PC-9 (cell line): ENCODE measurements at regions of chr10 and their contacts with region 1.

Region 1: GRCh38 chr10:102394079-102394800 is 1.3 kb upstream of the NFKB2 start:
- DNase-seq: peak; percentile 75 to 87
- H3K4me3 ChIP-seq: peak overlapping the region; percentile 77
- H3K27ac ChIP-seq: peak overlapping the region; percentile 40
- H3K4me1 ChIP-seq: 0 out of 2 replicates have a peak, but pooled peaks cover 6% of the 10 kb centered on the region
- H3K27me3 ChIP-seq: no peaks in the 10 kb centered on the region
- CTCF ChIP-seq: peak; percentile 79

Region 2: GRCh38 chr10:102368072-102368471 is 26.2 kb before region 1 on chr10:
- CTCF ChIA-PET with region 1: no interaction called
- POLR2A ChIA-PET with region 1: interaction called, 3 read pairs
- intact Hi-C with region 1: loop called (anchors 2 kb)
- DNase-seq: peak; percentile 79 to 90
- H3K4me3 ChIP-seq: no peak overlapping the region
- H3K27ac ChIP-seq: peak overlapping the region; percentile 80
- H3K4me1 ChIP-seq: peaks cover 23% of the 10 kb centered on the region
- H3K27me3 ChIP-seq: no peaks in the 10 kb centered on the region
- CTCF ChIP-seq: no peak

Region 3: DNA sequence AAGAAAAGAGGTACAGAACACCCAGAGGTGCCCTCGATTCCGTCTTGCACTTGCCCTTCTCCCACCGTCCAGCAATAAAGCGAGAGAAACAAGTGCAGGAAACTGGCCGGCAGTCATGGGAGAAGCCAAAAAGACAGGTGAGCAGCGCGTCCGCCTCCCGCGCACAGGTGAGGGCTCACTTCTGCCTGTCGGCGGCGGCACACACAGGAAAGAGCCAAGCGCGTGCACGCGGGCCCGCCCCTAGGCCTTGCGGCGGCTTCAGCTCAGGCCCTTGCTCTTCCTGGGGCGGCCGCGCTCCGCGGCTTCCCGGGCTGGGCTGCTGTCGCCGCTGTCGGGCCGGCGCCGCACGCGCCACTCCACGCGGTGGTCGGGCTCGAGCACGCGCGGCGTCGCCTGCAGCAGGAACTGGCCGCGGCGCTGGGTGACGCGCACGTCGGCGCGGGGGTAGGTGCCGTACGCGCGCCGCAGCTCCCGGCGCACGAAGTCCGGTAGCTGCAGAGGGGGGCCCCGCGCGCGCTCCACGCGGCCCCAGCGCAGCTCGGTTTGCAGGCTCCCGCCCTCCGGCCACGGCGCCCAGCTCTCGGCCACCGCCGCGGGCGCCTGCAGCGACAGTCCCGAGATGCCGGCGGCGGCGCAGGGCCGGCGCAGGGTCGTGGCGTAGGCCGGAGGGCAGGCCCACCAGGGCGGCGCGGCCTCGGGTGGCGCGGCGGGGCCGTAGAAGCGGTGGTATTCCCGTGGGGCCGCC is 56.1 kb after region 1 on chr10:
- CTCF ChIA-PET with region 1: interaction called, 12 read pairs
- POLR2A ChIA-PET with region 1: no interaction called
- intact Hi-C with region 1: no loop called
- DNase-seq: peak; percentile 50 to 82
- H3K4me3 ChIP-seq: peak overlapping the region; percentile 77
- H3K27ac ChIP-seq: peak overlapping the region; percentile 59
- H3K4me1 ChIP-seq: peaks cover 17% of the 10 kb centered on the region
- H3K27me3 ChIP-seq: no peaks in the 10 kb centered on the region
- CTCF ChIP-seq: no peak

Region 4: DNA sequence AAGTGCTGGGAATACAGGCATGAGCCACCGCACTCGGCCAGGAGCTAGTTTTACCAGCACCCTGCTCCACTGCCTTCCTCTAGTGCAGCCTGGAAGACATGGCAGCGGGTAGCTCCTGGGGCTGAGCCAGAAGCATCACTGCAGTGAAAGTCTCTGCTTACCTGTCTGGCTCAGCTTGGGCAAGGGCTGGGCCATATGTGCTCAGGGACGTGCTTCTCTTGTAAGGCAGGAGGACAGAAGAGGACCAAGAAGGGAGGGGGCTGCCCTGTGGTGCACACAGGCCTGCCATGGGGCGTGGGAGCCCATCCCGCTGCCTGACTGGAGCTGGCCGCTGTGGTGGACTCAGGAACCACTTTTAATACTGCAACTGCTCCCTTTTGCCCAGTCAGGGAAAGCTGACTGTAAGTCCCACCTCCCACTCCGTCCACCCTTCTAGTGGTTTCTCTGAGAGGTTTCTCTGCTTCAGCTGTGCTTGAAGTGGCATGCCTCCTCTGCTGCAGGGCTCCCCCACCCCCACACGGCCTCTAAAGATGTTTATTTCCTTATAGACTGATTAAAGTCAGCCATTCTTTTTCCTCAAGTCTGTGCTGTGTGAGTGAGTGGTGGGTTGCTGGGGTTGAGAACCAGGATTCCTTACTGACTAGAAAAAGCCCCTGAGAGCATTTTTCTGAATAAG is 82.4 kb after region 1 on chr10:
- CTCF ChIA-PET with region 1: no interaction called
- POLR2A ChIA-PET with region 1: no interaction called
- intact Hi-C with region 1: loop called (anchors 5 kb)
- DNase-seq: no peak
- H3K4me3 ChIP-seq: no peak overlapping the region
- H3K27ac ChIP-seq: no peak overlapping the region
- H3K4me1 ChIP-seq: no peaks in the 10 kb centered on the region
- H3K27me3 ChIP-seq: no peaks in the 10 kb centered on the region
- CTCF ChIP-seq: no peak

Region 5: GRCh38 chr10:102583435-102584417 is 189.5 kb after region 1 on chr10:
- CTCF ChIA-PET with region 1: interaction called, 3 read pairs
- POLR2A ChIA-PET with region 1: interaction called, 21 read pairs
- intact Hi-C with region 1: no loop called
- DNase-seq: peak; percentile 60 to 66
- H3K4me3 ChIP-seq: no peak overlapping the region
- H3K27ac ChIP-seq: no peak overlapping the region
- H3K4me1 ChIP-seq: no peaks in the 10 kb centered on the region
- H3K27me3 ChIP-seq: no peaks in the 10 kb centered on the region
- CTCF ChIP-seq: peak; percentile 83

Region 6: DNA sequence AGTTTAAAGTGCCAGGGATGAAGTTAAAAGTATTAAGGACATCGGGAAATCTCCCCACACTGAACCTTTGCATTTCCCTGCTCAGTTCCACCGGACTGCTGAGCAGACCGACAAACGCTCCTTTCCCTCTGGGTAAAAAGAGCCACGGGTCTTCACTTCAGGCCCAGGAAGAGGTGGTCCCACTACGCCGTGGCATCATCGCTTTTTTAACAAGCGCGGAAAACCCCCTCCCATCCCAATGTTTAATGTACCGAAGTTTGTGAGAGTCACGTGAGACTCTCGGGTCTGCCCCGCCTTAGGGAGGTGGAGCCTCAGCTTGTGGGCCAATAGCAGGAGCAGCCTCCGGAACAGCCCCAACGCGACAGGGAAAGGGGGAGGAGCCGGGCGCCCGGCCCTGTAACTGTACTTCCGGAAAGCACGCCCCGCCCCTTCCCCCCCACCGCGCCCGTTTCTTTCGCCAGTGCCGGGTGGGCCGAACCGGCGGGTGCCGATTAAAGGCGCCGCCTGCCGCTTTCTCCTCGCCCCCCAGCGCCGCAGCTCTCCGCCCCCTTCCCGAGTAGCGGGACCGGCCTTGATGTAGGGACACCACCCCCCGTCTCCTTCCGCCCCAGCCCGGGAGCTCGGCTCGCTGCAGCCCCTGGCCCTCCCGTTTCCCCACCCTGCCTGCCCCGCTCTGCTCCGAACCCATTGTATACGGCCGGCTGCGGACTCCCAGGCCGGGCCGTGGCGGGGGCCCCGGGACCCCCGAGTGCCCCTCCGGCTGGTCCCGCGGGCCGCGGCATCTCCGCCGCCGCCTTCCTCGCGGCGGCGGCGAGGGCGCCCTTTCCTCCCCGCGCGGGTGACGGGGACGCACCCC is 247.9 kb after region 1 on chr10:
- CTCF ChIA-PET with region 1: no interaction called
- POLR2A ChIA-PET with region 1: no interaction called
- intact Hi-C with region 1: loop called (anchors 10 kb)
- DNase-seq: peak; percentile 84 to 90
- H3K4me3 ChIP-seq: peak overlapping the region; percentile 70
- H3K27ac ChIP-seq: peak overlapping the region; percentile 75
- H3K4me1 ChIP-seq: 0 out of 2 replicates have a peak, but pooled peaks cover 4% of the 10 kb centered on the region
- H3K27me3 ChIP-seq: no peaks in the 10 kb centered on the region
- CTCF ChIP-seq: no peak

Region 7: DNA sequence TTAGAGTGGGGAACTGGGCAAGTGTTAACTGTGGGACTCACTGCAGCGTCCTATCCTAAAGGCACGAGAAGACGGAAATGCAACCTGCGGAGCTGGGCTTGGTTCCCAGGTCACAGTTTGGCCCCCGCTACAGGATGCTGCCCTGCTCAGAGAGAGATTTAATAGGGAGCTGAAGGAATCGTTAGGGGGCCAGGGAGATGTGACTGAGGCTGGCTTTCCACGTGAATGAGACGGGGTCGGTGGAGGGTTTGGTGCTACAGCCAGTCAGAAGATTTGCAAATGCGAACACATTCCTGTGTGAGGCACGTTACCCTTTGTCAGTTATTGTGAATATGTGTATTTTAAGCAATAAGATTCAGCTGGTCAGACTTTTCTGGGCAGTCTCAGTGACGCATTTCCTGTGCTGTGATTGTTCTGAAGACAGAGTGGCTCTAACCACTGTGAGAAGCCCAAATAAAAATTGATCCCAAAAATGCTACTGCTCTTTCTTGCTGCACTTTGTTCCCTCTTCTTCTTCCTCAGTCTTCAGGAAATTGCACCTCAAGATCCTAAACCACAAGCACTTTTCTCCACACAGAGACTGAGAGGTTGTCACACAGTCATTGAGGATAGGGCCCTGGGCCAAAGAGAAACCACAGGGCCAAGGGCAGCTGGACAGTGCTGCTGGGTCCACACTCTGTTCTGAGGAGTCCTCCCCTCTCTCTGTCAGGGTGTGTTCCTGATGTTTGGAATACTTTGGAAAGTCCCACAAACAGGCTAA is 421.7 kb after region 1 on chr10:
- CTCF ChIA-PET with region 1: no interaction called
- POLR2A ChIA-PET with region 1: no interaction called
- intact Hi-C with region 1: no loop called
- DNase-seq: no peak
- H3K4me3 ChIP-seq: no peak overlapping the region
- H3K27ac ChIP-seq: no peak overlapping the region
- H3K4me1 ChIP-seq: peaks cover 19% of the 10 kb centered on the region
- H3K27me3 ChIP-seq: no peaks in the 10 kb centered on the region
- CTCF ChIP-seq: no peak